Activated naive CD4-positive, alpha-beta T cell treated with anti-CD3 and anti-CD28 coated beads for 36 hours (primary cell): ENCODE measurements at regions of chr2 and their contacts with region 1.

Region 1: DNA sequence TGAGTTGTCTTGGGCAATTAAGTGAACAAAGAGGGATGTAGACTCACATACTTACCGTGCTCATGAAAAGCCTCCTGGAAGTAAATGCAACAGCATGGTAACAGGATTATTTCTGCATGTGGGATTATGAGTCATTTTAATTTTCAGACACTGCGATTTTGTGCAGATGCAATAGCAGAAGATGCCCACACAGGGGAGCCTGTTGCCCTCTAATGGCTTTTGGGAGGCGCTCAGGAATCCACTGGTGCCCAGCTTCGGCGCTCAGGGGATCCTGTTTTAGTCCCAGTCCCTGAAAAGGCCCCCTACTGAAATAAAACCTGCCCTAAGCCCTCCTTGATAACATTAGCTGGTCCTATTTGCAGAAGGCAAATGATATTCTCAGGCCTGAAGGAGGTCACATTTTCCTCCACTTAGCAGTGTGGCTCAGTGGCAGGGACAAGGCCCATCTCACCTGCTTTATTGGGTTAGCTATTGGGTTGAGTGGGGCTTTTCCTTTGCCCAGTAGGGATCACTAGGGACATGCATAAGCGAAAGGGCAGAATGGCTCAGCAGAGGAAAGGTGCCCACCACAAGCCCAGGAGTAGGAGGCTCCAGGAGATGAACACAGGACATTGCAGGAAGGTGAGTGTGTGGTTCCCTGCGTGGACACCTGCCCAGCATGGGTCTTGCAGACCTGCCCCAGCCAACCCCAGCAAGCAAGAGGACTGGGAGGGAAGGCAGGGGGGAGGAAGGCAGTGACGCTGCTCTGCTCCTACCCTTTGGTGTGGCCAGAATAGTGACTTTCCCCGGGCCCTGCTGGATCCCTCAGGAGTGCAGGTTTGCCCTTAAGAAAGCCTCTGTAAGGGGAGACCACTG is 26.5 kb upstream of the KCNS3 start:
- DNase-seq: peak; percentile 60
- H3K4me3 Mint-ChIP-seq: no peak overlapping the region
- H3K27ac Mint-ChIP-seq: no peak overlapping the region
- H3K4me1 Mint-ChIP-seq: no peaks in the 10 kb centered on the region
- H3K27me3 Mint-ChIP-seq: peaks cover 24% of the 10 kb centered on the region

Region 2: GRCh38 chr2:18117592-18117991 is 265.6 kb after region 1 on chr2:
- CTCF ChIA-PET with region 1: no interaction called
- intact Hi-C with region 1: loop called (anchors 1 kb)
- DNase-seq: peak; percentile 43
- H3K4me3 Mint-ChIP-seq: no peak overlapping the region
- H3K27ac Mint-ChIP-seq: no peak overlapping the region
- H3K4me1 Mint-ChIP-seq: no peaks in the 10 kb centered on the region
- H3K27me3 Mint-ChIP-seq: peaks cover 13% of the 10 kb centered on the region

Region 3: DNA sequence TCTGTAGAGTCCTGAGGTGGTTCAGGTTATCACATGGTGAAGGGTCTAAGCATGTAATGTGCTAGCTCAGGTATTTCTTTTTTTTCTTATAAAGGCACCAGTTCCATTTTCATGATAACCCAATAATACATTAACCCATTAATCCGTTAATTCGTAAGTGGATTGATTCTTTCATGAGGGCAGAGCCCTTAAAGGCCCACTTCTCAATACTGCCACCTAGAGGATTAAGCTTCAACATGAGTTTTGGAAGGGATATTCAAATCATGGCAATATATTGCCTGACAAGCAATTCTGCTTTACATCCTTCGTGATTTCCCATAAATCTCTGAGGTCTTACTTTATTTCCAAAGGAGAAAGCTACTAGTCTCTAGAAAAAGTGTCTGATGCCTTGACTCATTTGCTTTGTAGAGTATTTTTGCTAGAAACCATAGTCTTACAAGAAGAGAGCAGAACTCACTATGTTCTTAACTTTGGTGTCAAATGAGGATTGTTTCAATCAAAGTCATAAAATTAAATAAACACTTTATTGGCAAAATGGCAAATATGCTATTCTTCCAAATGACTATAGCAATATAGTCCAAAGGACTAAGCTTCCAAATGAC is 297.8 kb after region 1 on chr2:
- CTCF ChIA-PET with region 1: no interaction called
- intact Hi-C with region 1: loop called (anchors 10 kb)
- DNase-seq: no peak
- H3K4me3 Mint-ChIP-seq: no peak overlapping the region
- H3K27ac Mint-ChIP-seq: no peak overlapping the region
- H3K4me1 Mint-ChIP-seq: no peaks in the 10 kb centered on the region
- H3K27me3 Mint-ChIP-seq: peaks cover 6% of the 10 kb centered on the region

Region 4: GRCh38 chr2:18178736-18179349 is 326.9 kb after region 1 on chr2:
- CTCF ChIA-PET with region 1: interaction called, 5 read pairs
- intact Hi-C with region 1: loop called (anchors 1 kb)
- DNase-seq: peak; percentile 54
- H3K4me3 Mint-ChIP-seq: no peak overlapping the region
- H3K27ac Mint-ChIP-seq: no peak overlapping the region
- H3K4me1 Mint-ChIP-seq: no peaks in the 10 kb centered on the region
- H3K27me3 Mint-ChIP-seq: peaks cover 11% of the 10 kb centered on the region

Region 5: GRCh38 chr2:18378020-18378653 is 526.2 kb after region 1 on chr2:
- CTCF ChIA-PET with region 1: interaction called, 5 read pairs
- intact Hi-C with region 1: loop called (anchors 1 kb)
- DNase-seq: peak; percentile 46
- H3K4me3 Mint-ChIP-seq: no peak overlapping the region
- H3K27ac Mint-ChIP-seq: no peak overlapping the region
- H3K4me1 Mint-ChIP-seq: no peaks in the 10 kb centered on the region
- H3K27me3 Mint-ChIP-seq: peaks cover 11% of the 10 kb centered on the region